ENCODE measurements at regions of chr4 and their contacts with region 1.

Region 1: GRCh38 chr4:70687821-70688794 is at the start of gene UTP3:
- DNase-seq: peak; percentile 96
- H3K4me3 Mint-ChIP-seq: peak within 1 kb of the TSS; percentile 99
- H3K27ac Mint-ChIP-seq: peak within 1 kb of the TSS; percentile 97
- H3K4me1 Mint-ChIP-seq: peaks cover 33% of the 10 kb centered on the region
- H3K27me3 Mint-ChIP-seq: no peaks in the 10 kb centered on the region
- total RNA-seq, gene UTP3: 33.6 to 35.5 TPM

Region 2: GRCh38 chr4:70298051-70298450 is 390.1 kb before region 1 on chr4:
- CTCF ChIA-PET with region 1: no interaction called
- POLR2A ChIA-PET with region 1: no interaction called
- intact Hi-C with region 1: no loop called
- DNase-seq: no peak
- H3K4me3 Mint-ChIP-seq: no peak overlapping the region
- H3K27ac Mint-ChIP-seq: no peak overlapping the region
- H3K4me1 Mint-ChIP-seq: no peaks in the 10 kb centered on the region
- H3K27me3 Mint-ChIP-seq: no peaks in the 10 kb centered on the region

Region 3: GRCh38 chr4:70601422-70602039 is 86.6 kb before region 1 on chr4:
- CTCF ChIA-PET with region 1: interaction called, 3 read pairs
- POLR2A ChIA-PET with region 1: no interaction called
- intact Hi-C with region 1: loop called (anchors 1 kb)
- DNase-seq: peak; percentile 74
- H3K4me3 Mint-ChIP-seq: no peak overlapping the region
- H3K27ac Mint-ChIP-seq: no peak overlapping the region
- H3K4me1 Mint-ChIP-seq: no peaks in the 10 kb centered on the region
- H3K27me3 Mint-ChIP-seq: peaks cover 4% of the 10 kb centered on the region

Region 4: DNA sequence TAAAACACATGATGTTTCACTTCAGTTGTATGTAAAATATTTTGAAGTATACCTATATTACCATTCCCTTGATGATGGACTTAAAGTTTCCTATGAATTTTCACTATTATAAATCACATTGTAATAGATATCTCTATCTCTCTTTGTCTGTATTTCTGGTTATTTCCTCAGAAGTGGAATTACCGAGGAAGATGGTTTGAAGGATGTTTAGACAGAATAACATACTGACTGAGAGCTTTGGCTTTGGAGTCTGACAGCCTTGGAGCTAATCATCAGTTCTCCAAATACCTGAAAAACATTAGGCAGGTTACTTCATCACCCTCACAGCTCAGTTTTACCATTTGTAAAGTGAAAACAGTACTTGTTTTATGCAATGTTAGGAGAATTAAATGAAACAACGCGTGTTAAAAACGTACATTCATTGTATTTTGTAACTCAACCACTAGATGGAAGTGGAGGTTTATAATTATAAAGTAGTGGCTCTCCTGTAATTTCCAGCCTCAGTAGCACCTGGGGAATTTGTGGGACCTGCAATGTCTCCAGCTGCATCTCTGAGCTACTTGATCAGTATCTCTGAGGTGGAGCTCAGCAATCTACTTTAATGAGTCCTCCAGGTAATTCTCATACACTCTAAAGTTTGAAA is 36.1 kb before region 1 on chr4:
- CTCF ChIA-PET with region 1: interaction called, 6 read pairs
- POLR2A ChIA-PET with region 1: no interaction called
- intact Hi-C with region 1: loop called (anchors 1 kb)
- DNase-seq: no peak
- H3K4me3 Mint-ChIP-seq: no peak overlapping the region
- H3K27ac Mint-ChIP-seq: no peak overlapping the region
- H3K4me1 Mint-ChIP-seq: no peaks in the 10 kb centered on the region
- H3K27me3 Mint-ChIP-seq: peaks cover 3% of the 10 kb centered on the region

Region 5: DNA sequence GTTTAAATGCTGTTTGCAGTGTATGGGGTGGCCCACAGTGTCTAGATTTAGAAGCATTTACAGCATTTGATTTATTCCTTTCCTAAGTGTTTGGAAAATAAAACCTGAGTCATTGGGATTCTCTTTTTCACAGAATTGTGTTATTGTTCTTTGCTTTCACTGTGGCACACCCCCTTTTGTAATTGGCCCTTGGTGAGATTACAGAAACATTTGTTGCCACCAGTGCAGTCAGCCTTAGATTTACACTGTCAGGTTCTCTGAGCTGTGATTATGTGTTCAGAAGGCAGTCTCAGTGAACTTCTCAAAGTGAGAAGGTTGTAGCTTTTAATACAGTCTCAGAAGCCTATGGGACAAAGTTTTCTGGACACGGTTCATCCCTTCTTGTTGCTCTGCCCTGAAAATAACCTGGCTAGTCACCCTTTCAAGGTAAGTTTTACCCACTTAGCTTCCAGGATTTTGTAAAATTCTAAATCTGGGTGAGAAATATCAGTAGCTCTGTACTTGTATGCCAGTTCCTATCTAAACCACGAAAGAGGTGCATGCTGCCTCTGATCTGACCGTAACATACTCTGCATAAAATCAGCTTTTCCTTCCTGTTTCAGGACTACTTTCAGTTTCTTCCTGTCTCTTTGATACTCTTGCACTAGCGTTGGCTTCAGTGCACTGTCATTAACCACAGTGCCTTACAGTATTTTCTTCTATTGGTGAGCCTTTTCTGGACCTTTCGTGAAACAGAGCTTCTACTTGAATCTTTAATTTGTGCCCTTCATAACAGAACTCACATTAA is 46.3 kb after region 1 on chr4:
- CTCF ChIA-PET with region 1: interaction called, 9 read pairs
- POLR2A ChIA-PET with region 1: interaction called, 8 read pairs
- intact Hi-C with region 1: loop called (anchors 1 kb)
- DNase-seq: peak; percentile 40
- H3K4me3 Mint-ChIP-seq: peak overlapping the region; percentile 60
- H3K27ac Mint-ChIP-seq: peak overlapping the region; percentile 72
- H3K4me1 Mint-ChIP-seq: peaks cover 32% of the 10 kb centered on the region
- H3K27me3 Mint-ChIP-seq: no peaks in the 10 kb centered on the region

Region 6: DNA sequence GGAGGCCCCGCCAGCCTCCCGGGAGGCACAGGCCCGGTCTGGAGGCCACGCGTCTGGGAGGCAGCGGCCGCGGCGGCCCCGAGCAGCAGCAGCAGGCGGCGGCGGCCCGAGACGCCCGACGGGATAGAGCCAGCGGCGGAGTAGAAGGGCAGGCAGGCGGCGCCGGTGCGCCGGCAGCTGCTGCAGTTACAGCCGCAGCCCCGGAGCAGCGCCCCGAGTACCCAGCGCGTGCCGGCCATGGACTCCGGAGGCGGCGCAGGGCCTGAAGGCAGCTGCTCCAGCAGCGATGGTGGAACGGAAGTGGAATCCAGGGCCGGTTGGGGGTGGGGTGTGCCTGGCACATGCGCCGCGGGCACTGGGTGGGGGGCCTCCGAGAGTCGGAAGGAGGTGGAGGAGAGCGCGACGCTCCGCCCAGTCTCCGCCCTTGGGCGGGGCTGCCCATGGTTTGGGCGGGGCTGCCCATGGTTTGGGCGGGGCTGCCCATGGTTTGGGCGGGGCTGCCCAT is 151.5 kb after region 1 on chr4 and contains the start of gene GRSF1:
- CTCF ChIA-PET with region 1: interaction called, 3 read pairs
- POLR2A ChIA-PET with region 1: interaction called, 7 read pairs
- intact Hi-C with region 1: loop called (anchors 1 kb)
- DNase-seq: peak; percentile 97
- H3K4me3 Mint-ChIP-seq: peak within 1 kb of the TSS; percentile 98
- H3K27ac Mint-ChIP-seq: peak within 1 kb of the TSS; percentile 99
- H3K4me1 Mint-ChIP-seq: peaks cover 31% of the 10 kb centered on the region
- H3K27me3 Mint-ChIP-seq: no peaks in the 10 kb centered on the region
- total RNA-seq, gene GRSF1: 97.8 to 97.9 TPM

Region 7: GRCh38 chr4:70901984-70902576 is 214.0 kb after region 1 on chr4 and contains the start of gene MOB1B:
- CTCF ChIA-PET with region 1: interaction called, 4 read pairs
- POLR2A ChIA-PET with region 1: no interaction called
- intact Hi-C with region 1: loop called (anchors 1 kb)
- DNase-seq: peak; percentile 92
- H3K4me3 Mint-ChIP-seq: peak within 1 kb of the TSS; percentile 88
- H3K27ac Mint-ChIP-seq: peak within 1 kb of the TSS; percentile 73
- H3K4me1 Mint-ChIP-seq: peaks cover 20% of the 10 kb centered on the region
- H3K27me3 Mint-ChIP-seq: no peaks in the 10 kb centered on the region
- total RNA-seq, gene MOB1B: 18.6 to 19.9 TPM

Region 8: DNA sequence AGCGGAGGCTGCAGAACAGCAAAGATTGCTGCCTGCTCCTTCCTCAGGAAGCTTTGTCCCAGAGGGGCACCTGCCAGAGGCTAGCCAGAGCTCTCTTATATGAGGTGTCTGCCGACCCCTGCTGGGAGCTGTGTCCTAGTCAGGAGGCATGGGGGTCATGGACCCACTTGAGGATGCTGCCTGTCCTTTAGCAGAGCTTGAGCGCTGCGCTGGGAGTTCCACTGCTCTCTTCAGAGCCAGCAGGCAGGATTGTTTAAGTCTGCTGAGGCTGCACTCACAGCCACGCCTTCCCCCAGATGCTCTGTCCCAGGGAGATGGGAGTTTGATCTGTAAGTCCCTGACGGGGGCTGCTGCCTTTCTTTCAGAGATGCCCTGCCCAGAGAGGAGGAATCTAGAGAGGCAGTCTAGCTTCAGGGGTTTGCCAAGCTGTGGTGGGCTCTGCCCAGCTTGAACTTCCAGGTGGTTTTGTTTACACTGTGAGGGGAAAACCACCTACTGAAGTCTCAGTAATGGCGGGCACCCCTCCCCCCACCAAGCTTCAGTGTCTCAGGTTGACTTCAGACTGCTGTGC is 316.3 kb after region 1 on chr4:
- CTCF ChIA-PET with region 1: interaction called, 5 read pairs
- POLR2A ChIA-PET with region 1: no interaction called
- intact Hi-C with region 1: loop called (anchors 2 kb)
- DNase-seq: peak; percentile 72
- H3K4me3 Mint-ChIP-seq: peak overlapping the region; percentile 4
- H3K27ac Mint-ChIP-seq: peak overlapping the region; percentile 64
- H3K4me1 Mint-ChIP-seq: peaks cover 79% of the 10 kb centered on the region
- H3K27me3 Mint-ChIP-seq: no peaks in the 10 kb centered on the region